Left ventricle myocardium inferior (tissue), 1 donor: ENCODE measurements at regions of chr22 and their contacts with region 1.

Region 1: GRCh38 chr22:43993027-43993760 is 30.9 kb upstream of the PARVB start:
- DNase-seq: peak; percentile 45
- H3K4me3 ChIP-seq: no peak overlapping the region
- H3K27ac ChIP-seq: peak overlapping the region; percentile 28
- H3K4me1 ChIP-seq: peaks cover 42% of the 10 kb centered on the region
- H3K27me3 ChIP-seq: no peaks in the 10 kb centered on the region
- CTCF ChIP-seq: peak; percentile 99

Region 2: DNA sequence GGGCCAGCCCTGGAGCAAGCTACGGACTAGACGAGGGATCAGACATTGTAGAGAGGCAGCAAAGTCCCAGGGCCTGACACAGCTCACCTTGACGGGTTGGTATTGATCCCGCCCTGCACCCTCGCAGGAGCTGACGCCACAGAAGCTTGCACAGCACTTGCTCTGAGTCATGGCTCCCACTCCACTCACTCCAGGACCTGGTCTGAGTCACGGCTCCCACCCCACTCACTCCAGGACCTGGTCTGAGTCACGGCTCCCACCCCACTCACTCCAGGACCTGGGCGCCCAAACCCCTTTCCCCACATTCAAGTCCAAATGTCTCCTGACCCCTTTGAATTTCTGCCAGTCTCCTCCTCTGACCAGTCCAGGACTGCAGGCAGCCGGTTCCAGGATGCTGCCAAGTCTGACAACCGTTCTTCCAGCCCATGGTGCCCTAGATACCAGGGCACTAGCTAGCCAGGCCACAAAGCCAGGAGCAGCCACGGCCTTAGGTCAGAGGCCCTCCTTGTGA is 95.4 kb before region 1 on chr22:
- intact Hi-C with region 1: no loop called
- DNase-seq: no peak
- H3K4me3 ChIP-seq: no peak overlapping the region
- H3K27ac ChIP-seq: no peak overlapping the region
- H3K4me1 ChIP-seq: no peaks in the 10 kb centered on the region
- H3K27me3 ChIP-seq: peaks cover 74% of the 10 kb centered on the region
- CTCF ChIP-seq: no peak

Region 3: GRCh38 chr22:44116755-44117684 is 123.8 kb after region 1 on chr22:
- intact Hi-C with region 1: no loop called
- DNase-seq: peak; percentile 47
- H3K4me3 ChIP-seq: no peak overlapping the region
- H3K27ac ChIP-seq: peak overlapping the region; percentile 68
- H3K4me1 ChIP-seq: peaks cover 30% of the 10 kb centered on the region
- H3K27me3 ChIP-seq: no peaks in the 10 kb centered on the region
- CTCF ChIP-seq: no peak

Region 4: GRCh38 chr22:44625981-44626687 is 632.9 kb after region 1 on chr22:
- intact Hi-C with region 1: loop called (anchors 5 kb)
- DNase-seq: peak; percentile 62
- H3K4me3 ChIP-seq: no peak overlapping the region
- H3K27ac ChIP-seq: no peak overlapping the region
- H3K4me1 ChIP-seq: peaks cover 4% of the 10 kb centered on the region
- H3K27me3 ChIP-seq: peaks cover 43% of the 10 kb centered on the region
- CTCF ChIP-seq: peak; percentile 99